Mammary epithelial cell (primary cell): ENCODE measurements at regions of chr6 and their contacts with region 1.

Region 1: GRCh38 chr6:16494793-16495192 is 256.4 kb downstream of the GMPR start:
- DNase-seq: peak; percentile 53
- H3K4me3 ChIP-seq: no peak overlapping the region
- H3K27ac ChIP-seq: no peak overlapping the region
- H3K4me1 ChIP-seq: peaks cover 15% of the 10 kb centered on the region
- H3K27me3 ChIP-seq: no peaks in the 10 kb centered on the region
- CTCF ChIP-seq: no peak

Region 2: DNA sequence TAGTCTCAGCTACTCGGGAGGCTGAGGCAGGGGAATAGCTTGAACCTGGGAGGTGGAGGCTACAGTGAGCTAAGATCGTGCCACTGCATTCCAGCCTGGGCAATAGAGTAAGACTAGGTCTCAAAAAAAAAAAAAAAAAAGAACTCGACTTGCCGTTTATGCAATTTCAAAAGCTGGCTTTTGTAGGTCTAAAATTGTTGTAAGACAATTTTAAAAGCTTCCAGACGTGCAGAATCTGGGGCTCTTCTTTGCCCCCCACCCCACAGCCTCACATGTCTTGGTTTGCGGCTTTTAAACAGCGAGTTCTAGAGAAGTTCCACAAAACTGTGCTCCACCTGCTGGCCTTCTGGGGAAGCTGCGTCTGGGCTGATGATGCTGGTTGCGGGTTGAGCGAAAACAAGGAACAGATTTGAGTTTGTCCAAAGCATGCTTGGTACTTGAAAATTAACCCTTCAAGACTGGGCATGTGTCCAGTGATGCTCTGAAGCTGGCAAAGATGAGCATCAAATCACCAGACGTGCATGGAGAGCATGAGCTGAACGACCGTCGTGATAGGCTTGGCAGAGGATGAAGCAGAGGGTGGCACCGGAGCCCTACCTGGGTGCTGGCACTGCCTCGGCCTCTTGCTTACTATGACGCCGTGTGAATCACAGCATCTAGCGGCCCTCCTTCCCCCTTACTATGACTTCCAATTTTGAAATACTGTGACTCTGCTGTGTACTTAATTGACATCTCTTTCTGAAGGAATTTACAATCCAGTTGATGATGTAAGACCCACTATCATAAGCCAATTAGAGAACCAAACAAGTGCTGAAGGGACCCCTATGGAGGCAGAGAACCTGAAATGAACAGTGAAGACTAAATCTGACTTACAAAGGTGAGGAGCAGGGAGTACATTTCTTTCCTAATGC is 85.0 kb before region 1 on chr6:
- CTCF ChIA-PET with region 1: no interaction called
- dilution Hi-C with region 1: no loop called
- in situ Hi-C with region 1: no loop called
- intact Hi-C with region 1: loop called (anchors 5 kb)
- DNase-seq: peak; percentile 62
- H3K4me3 ChIP-seq: no peak overlapping the region
- H3K27ac ChIP-seq: no peak overlapping the region
- H3K4me1 ChIP-seq: no peaks in the 10 kb centered on the region
- H3K27me3 ChIP-seq: no peaks in the 10 kb centered on the region
- CTCF ChIP-seq: peak; percentile 67

Region 3: GRCh38 chr6:16723826-16724225 is 229.0 kb after region 1 on chr6:
- CTCF ChIA-PET with region 1: no interaction called
- dilution Hi-C with region 1: no loop called
- in situ Hi-C with region 1: no loop called
- intact Hi-C with region 1: no loop called
- DNase-seq: peak; percentile 92
- H3K4me3 ChIP-seq: no peak overlapping the region
- H3K27ac ChIP-seq: peak overlapping the region; percentile 85
- H3K4me1 ChIP-seq: peaks cover 61% of the 10 kb centered on the region
- H3K27me3 ChIP-seq: no peaks in the 10 kb centered on the region
- CTCF ChIP-seq: no peak